MCF 10A (cell line): ENCODE measurements at regions of chr3 and their contacts with region 1.

Region 1: GRCh38 chr3:50611464-50612233 is at the start of gene CISH:
- DNase-seq: peak; percentile 93
- H3K4me3 Mint-ChIP-seq: peak within 1 kb of the TSS; percentile 93
- H3K27ac Mint-ChIP-seq: peak within 1 kb of the TSS; percentile 42
- H3K4me1 Mint-ChIP-seq: peaks cover 40% of the 10 kb centered on the region
- H3K27me3 Mint-ChIP-seq: no peaks in the 10 kb centered on the region
- CTCF ChIP-seq: peak; percentile 37
- total RNA-seq, gene CISH: 0.26 and 0.59 TPM in 2 replicates

Region 2: DNA sequence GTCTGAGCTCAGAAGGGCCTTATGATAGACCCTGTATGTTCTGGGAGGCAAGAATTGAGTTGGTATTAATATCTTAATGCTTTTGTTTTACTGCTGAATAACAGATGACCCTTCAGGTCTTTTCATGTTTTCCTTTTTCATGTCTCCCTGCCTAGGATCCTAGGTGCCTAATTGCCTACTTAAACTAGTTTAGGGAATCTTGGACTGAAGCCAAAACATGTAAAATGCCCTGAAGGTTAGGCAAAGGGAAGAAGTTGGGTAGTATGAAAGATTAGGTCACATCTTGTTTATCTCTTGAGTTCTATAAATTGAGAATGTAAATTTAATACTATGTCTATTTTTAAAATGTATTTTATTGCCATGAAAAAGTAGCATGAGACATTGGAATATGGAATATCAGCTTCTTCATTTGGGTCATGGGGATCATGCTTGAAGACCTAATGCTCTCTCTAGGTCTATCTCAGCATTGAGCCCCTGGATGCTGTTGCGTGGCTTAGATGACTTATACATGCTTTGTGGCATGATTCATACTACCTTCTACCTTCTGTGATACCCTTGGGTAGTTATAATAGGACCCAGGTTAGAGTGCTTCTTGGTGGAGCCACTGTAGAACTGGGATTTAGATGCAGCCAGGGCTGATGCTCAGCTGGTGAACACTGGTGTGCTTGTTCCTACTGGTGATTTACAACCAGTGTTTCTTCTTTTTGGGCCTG is 645.3 kb before region 1 on chr3:
- CTCF ChIA-PET with region 1: no interaction called
- POLR2A ChIA-PET with region 1: no interaction called
- intact Hi-C with region 1: no loop called
- DNase-seq: peak; percentile 33
- H3K4me3 Mint-ChIP-seq: no peak overlapping the region
- H3K27ac Mint-ChIP-seq: no peak overlapping the region
- H3K4me1 Mint-ChIP-seq: peaks cover 4% of the 10 kb centered on the region
- H3K27me3 Mint-ChIP-seq: no peaks in the 10 kb centered on the region
- CTCF ChIP-seq: no peak

Region 3: DNA sequence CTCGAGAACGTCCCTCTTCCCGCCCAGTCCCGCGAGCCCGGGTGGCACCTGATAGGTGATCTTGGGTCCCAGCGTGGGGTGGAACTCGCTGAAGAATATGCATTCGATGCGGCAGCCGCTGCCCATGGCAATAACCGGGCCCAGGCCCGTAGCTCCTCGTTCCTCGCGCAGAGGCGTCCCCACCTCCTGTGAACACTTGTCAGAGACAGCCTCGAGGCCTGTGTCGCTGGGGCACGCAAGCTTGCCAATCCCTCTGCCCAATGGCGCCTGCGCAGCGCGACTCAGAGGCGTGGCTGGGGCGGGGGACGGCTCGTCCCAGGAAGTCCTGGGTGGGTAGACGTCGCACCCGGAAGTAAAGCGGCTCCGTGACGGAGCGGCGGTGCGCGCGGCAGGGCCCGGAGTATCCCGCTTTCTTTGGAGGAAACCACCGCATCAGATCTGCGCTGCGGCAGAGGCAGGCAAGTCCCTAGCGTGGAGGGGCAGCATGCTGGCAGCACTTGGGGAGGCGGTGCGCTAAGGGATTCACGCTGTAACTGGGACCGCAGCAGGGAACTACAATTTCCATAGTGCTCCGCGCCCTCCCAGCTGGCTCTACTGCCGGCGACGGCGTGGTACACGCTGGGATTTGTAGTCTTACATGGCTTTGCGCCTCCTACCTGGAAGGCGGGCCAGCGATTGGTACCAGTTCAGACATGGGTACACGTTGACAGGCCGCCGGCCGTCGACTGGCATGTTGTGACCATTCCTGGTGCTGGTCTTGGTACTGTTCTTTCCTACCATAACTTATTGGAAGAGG is 260.9 kb before region 1 on chr3 and contains the starts of genes CYB561D2 and NPRL2:
- CTCF ChIA-PET with region 1: interaction called, 4 read pairs
- POLR2A ChIA-PET with region 1: interaction called, 9 read pairs
- intact Hi-C with region 1: loop called (anchors 5 kb)
- DNase-seq: peak; percentile 95
- H3K4me3 Mint-ChIP-seq: peak within 1 kb of the TSS; percentile 87
- H3K27ac Mint-ChIP-seq: peak within 1 kb of the TSS; percentile 95
- H3K4me1 Mint-ChIP-seq: peaks cover 26% of the 10 kb centered on the region
- H3K27me3 Mint-ChIP-seq: no peaks in the 10 kb centered on the region
- CTCF ChIP-seq: no peak
- total RNA-seq, gene CYB561D2: 24.0 and 24.1 TPM in 2 replicates
- total RNA-seq, gene NPRL2: 21.1 and 22.1 TPM in 2 replicates

Region 4: GRCh38 chr3:50550079-50550741 is 61.4 kb before region 1 on chr3:
- CTCF ChIA-PET with region 1: interaction called, 13 read pairs
- POLR2A ChIA-PET with region 1: no interaction called
- intact Hi-C with region 1: loop called (anchors 1 kb)
- DNase-seq: peak; percentile 61
- H3K4me3 Mint-ChIP-seq: no peak overlapping the region
- H3K27ac Mint-ChIP-seq: no peak overlapping the region
- H3K4me1 Mint-ChIP-seq: no peaks in the 10 kb centered on the region
- H3K27me3 Mint-ChIP-seq: no peaks in the 10 kb centered on the region
- CTCF ChIP-seq: peak; percentile 87

Region 5: GRCh38 chr3:50627407-50628051 is 15.9 kb after region 1 on chr3:
- CTCF ChIA-PET with region 1: interaction called, 61 read pairs
- POLR2A ChIA-PET with region 1: interaction called, 7 read pairs
- intact Hi-C with region 1: no loop called
- DNase-seq: peak; percentile 78
- H3K4me3 Mint-ChIP-seq: no peak overlapping the region
- H3K27ac Mint-ChIP-seq: peak overlapping the region; percentile 73
- H3K4me1 Mint-ChIP-seq: peaks cover 30% of the 10 kb centered on the region
- H3K27me3 Mint-ChIP-seq: no peaks in the 10 kb centered on the region
- CTCF ChIP-seq: peak; percentile 32

Region 6: DNA sequence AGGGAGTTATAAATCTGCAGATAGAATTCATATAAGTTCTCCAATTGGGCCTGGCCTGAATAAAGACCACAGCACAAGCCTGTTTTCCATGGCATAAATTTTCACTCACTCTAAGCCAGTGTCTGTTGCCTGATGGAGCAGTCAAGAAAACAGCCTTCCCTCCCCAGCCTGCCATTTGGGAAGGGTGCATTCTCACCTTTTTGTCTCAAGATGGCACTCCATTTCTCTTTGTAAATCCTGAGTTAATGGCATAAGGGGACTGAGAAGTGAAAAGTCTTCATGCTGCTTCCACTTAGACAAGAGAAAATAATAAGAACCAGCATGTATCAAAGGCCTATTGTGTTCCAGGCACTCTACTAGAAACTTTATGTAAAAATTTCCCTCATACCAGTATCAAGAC is 657.8 kb after region 1 on chr3:
- CTCF ChIA-PET with region 1: interaction called, 4 read pairs
- POLR2A ChIA-PET with region 1: no interaction called
- intact Hi-C with region 1: loop called (anchors 1 kb)
- DNase-seq: peak; percentile 39
- H3K4me3 Mint-ChIP-seq: no peak overlapping the region
- H3K27ac Mint-ChIP-seq: no peak overlapping the region
- H3K4me1 Mint-ChIP-seq: no peaks in the 10 kb centered on the region
- H3K27me3 Mint-ChIP-seq: peaks cover 3% of the 10 kb centered on the region
- CTCF ChIP-seq: peak; percentile 23

Region 7: GRCh38 chr3:51379301-51379700 is 767.7 kb after region 1 on chr3:
- CTCF ChIA-PET with region 1: interaction called, 38 read pairs
- POLR2A ChIA-PET with region 1: interaction called, 28 read pairs
- intact Hi-C with region 1: loop called (anchors 2 kb)
- DNase-seq: no peak
- H3K4me3 Mint-ChIP-seq: no peak overlapping the region
- H3K27ac Mint-ChIP-seq: peak overlapping the region; percentile 28
- H3K4me1 Mint-ChIP-seq: peaks cover 5% of the 10 kb centered on the region
- H3K27me3 Mint-ChIP-seq: no peaks in the 10 kb centered on the region
- CTCF ChIP-seq: no peak

Region 8: DNA sequence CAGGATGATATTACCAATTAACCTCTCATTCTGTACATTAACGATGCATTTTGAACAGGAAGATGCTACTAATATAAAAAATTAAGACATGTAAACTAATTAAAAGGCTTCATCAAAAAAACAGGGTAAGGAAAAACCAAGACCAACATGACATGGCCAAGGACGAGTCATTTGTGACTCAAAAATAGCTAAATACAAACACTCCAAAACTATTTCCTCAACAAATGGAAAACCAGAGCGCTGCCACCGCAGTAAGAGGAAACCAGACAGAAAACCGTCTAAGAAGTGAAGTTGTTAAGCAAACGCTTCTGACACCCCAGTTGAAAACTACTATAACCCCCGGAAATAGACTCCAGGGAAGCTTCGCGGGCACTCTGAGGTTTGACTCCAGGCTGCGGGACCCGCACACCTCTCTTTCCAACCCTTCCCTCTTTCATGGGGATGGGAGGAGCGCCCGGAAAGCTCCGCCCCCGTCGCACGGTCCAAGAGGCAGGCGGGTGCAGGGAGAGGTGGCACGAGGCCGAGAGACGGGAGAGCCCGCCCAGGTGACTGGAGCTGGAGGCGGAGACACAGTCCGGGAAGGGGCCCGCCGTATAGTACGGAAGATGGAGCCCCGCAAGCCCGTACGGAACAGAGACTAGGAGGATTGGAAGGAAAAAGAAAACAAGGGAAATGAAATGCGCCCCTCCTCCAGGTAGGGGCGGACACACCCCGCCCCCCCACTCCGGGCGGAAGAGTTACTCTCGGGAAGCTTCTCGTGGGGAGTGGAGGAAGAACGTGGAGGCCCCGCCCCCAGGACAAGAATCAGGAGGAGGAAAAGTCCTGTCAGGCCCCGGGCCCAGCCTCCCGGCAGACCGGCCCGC is 887.5 kb after region 1 on chr3:
- CTCF ChIA-PET with region 1: no interaction called
- POLR2A ChIA-PET with region 1: interaction called, 17 read pairs
- intact Hi-C with region 1: no loop called
- DNase-seq: peak; percentile 96
- H3K4me3 Mint-ChIP-seq: peak overlapping the region; percentile 88
- H3K27ac Mint-ChIP-seq: peak overlapping the region; percentile 98
- H3K4me1 Mint-ChIP-seq: peaks cover 8% of the 10 kb centered on the region
- H3K27me3 Mint-ChIP-seq: no peaks in the 10 kb centered on the region
- CTCF ChIP-seq: no peak